GM12878 (cell line): ENCODE measurements at regions of chr15 and their contacts with region 1.

Region 1: DNA sequence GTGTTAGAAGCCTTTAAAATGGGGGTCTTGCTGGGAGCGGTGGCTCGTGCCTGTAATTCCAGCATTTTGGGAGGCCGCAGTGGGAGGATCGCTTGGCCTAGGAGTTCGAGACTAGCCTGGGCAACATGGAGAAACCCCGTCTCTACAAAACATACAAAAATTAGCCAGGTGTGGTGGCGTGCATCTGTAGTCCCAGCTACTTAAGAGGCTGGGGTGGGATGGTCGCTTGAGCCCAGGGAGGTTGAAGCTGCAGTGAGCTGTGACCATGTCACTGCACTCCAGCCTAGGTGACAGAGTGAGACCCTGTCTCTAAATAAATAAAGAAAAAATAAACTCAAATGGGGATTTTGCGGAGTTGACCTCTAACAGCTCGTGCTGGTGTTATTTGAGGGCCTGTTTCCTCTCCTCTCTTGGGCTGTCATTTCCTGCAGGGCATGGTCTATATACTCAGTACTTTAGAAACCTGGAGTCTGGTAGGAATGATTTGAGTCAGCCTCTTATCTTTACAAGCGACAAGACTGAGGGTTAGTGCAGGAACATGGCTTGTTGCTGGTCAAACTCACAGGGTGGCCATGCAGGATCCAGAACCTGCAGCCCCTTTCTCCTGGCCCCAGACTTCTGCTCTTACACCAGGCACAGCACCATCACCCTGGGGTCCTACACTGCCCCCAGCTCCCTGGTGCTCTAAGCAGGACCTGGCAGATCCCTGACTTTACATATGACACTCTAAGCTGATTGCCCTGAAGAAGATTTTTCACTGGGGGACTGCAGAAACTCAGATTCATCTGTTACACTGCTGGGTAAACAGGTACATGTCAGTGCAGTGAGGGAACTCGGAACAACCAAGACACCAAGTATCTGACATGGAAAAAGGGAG is 15.1 kb downstream of the EHD4 start:
- DNase-seq: peak; percentile 64
- ATAC-seq: peak; percentile 93
- H3K4me3 ChIP-seq: peak overlapping the region; percentile 20; the same call in 1 of the 2 replicates
- H3K27ac ChIP-seq: peak overlapping the region; percentile 75
- H3K4me1 ChIP-seq: peaks cover 24% of the 10 kb centered on the region
- H3K27me3 ChIP-seq: no peaks in the 10 kb centered on the region
- CTCF ChIP-seq: no peak
- EP300 ChIP-seq: no peak
- POLR2A ChIP-seq: no peak
- RAD21 ChIP-seq: no peak

Region 2: GRCh38 chr15:41936649-41937567 is 20.4 kb before region 1 on chr15:
- CTCF ChIA-PET with region 1: interaction called, 3 read pairs
- POLR2A ChIA-PET with region 1: interaction called, 8 read pairs
- RAD21 ChIA-PET with region 1: interaction called, 4 read pairs
- SMC1A ChIA-PET with region 1: interaction called, 22 read pairs
- in situ Hi-C with region 1: no loop called
- intact Hi-C with region 1: loop called (anchors 2 kb)
- DNase-seq: no peak
- ATAC-seq: peak; percentile 10; the same call in 1 of the 3 replicates
- H3K4me3 ChIP-seq: no peak overlapping the region
- H3K27ac ChIP-seq: peak overlapping the region; percentile 45
- H3K4me1 ChIP-seq: peaks cover 34% of the 10 kb centered on the region
- H3K27me3 ChIP-seq: no peaks in the 10 kb centered on the region
- CTCF ChIP-seq: peak; percentile 6 to 31 (median 29); a peak in 4 of 6 replicates
- EP300 ChIP-seq: no peak
- POLR2A ChIP-seq: peak; percentile 48; the same call in 1 of the 2 replicates
- RAD21 ChIP-seq: peak; percentile 30

Region 3: GRCh38 chr15:42079401-42079908 is 122.2 kb after region 1 on chr15:
- CTCF ChIA-PET with region 1: no interaction called
- POLR2A ChIA-PET with region 1: no interaction called
- RAD21 ChIA-PET with region 1: no interaction called
- SMC1A ChIA-PET with region 1: no interaction called
- in situ Hi-C with region 1: no loop called
- intact Hi-C with region 1: no loop called
- DNase-seq: no peak
- ATAC-seq: no peak
- H3K4me3 ChIP-seq: no peak overlapping the region
- H3K27ac ChIP-seq: no peak overlapping the region
- H3K4me1 ChIP-seq: no peaks in the 10 kb centered on the region
- H3K27me3 ChIP-seq: no peaks in the 10 kb centered on the region; a peak in 1 of 4 replicates
- CTCF ChIP-seq: no peak
- EP300 ChIP-seq: no peak
- POLR2A ChIP-seq: no peak
- RAD21 ChIP-seq: no peak